Psoas muscle (tissue), 8 donors: ENCODE measurements at regions of chr18 and their contacts with region 1.

Region 1: GRCh38 chr18:62982600-62983251 is 267.4 kb downstream of the PHLPP1 start:
- DNase-seq: no peak
- ATAC-seq: peak; percentile 58 to 84 (median 70)
- H3K4me3 ChIP-seq: peak overlapping the region; percentile 40
- H3K27ac ChIP-seq: no peak overlapping the region
- H3K4me1 ChIP-seq: no peaks in the 10 kb centered on the region
- H3K27me3 ChIP-seq: no peaks in the 10 kb centered on the region
- CTCF ChIP-seq: peak; percentile 79

Region 2: GRCh38 chr18:62186774-62187542 is 795.8 kb before region 1 on chr18 and contains the starts of genes PIGN and RELCH:
- intact Hi-C with region 1: loop called in 1 of 2 experiments (anchors 10 kb)
- DNase-seq: peak; percentile 91 to 95
- ATAC-seq: peak; percentile 95 to 99 (median 99)
- H3K4me3 ChIP-seq: peak within 1 kb of the TSS; percentile 100
- H3K27ac ChIP-seq: peak within 1 kb of the TSS; percentile 84
- H3K4me1 ChIP-seq: peaks cover 36% of the 10 kb centered on the region
- H3K27me3 ChIP-seq: no peaks in the 10 kb centered on the region
- CTCF ChIP-seq: no peak
- total RNA-seq, gene PIGN: 9.5 to 18.0 (median 13.0) TPM
- total RNA-seq, gene RELCH: 7.8 to 13.4 (median 10.9) TPM

Region 3: DNA sequence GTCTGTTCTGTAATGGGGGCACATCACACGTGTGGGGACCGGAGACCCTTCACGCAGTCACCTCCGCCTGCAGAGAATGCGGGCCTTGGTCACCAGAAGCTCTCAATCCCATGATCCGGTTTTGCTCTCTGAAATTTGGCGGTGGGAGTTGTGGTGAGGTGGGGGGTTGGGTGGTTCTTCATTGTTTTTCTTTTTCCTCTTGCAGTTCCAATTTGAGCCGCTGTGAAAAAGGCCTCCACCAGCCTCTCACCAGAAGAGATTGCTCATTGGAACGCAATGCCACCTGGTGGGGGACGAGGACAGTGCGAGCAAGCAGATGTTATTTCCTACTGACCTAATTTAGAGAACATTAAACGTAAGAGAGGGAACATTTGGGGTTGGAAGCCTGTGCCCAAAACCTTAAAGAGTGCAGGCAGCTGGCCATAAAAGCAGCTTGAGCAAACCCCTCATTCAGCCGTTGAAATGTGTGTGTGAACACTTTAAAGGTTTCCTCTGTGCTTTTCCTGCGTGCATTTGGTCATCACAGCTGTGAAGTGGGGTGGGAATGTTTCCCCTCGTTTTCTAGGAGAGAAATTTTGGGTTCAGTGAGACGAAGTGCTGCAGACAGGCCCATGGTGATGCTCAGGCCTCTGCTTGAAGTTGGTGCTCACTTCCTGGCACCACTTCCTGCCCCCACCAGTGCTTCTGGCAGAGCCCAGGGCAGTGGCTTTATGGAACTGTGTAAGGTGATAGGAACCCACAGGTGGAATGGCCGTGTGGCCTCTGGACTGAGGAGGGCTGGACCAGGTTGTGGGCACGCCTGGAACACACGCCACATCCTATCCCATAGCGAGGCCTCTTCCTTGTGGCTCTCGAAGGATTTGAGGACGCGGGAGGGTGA is 398.2 kb before region 1 on chr18:
- intact Hi-C with region 1: loop called (anchors 2 to 5 kb)
- DNase-seq: peak; percentile 84 to 91
- ATAC-seq: peak; percentile 90 to 93 (median 90)
- H3K4me3 ChIP-seq: peak overlapping the region; percentile 28
- H3K27ac ChIP-seq: peak overlapping the region; percentile 13
- H3K4me1 ChIP-seq: peaks cover 16% of the 10 kb centered on the region
- H3K27me3 ChIP-seq: no peaks in the 10 kb centered on the region
- CTCF ChIP-seq: peak; percentile 91

Region 4: GRCh38 chr18:62637807-62638687 is 344.7 kb before region 1 on chr18:
- intact Hi-C with region 1: loop called in 1 of 2 experiments (anchors 5 kb)
- DNase-seq: no peak
- ATAC-seq: peak in 1 of 4 donors; percentile 53
- H3K4me3 ChIP-seq: no peak overlapping the region
- H3K27ac ChIP-seq: no peak overlapping the region
- H3K4me1 ChIP-seq: no peaks in the 10 kb centered on the region
- H3K27me3 ChIP-seq: peaks cover 0 to 1% (median 0%) of the 10 kb centered on the region in 3 donors
- CTCF ChIP-seq: peak; percentile 55